Calu3 (cell line): ENCODE measurements at regions of chr15 and their contacts with region 1.

Region 1: GRCh38 chr15:57640935-57641682 is 49.4 kb downstream of the MYZAP start:
- DNase-seq: peak; percentile 64
- H3K4me3 Mint-ChIP-seq: no peak overlapping the region
- H3K27ac Mint-ChIP-seq: no peak overlapping the region
- H3K4me1 Mint-ChIP-seq: no peaks in the 10 kb centered on the region
- H3K27me3 Mint-ChIP-seq: no peaks in the 10 kb centered on the region
- CTCF ChIP-seq: peak; percentile 25

Region 2: GRCh38 chr15:57667171-57667849 is 26.2 kb after region 1 on chr15:
- CTCF ChIA-PET with region 1: no interaction called
- intact Hi-C with region 1: loop called (anchors 2 kb)
- DNase-seq: peak; percentile 55
- H3K4me3 Mint-ChIP-seq: peak overlapping the region; percentile 47
- H3K27ac Mint-ChIP-seq: peak overlapping the region; percentile 1
- H3K4me1 Mint-ChIP-seq: peaks cover 66% of the 10 kb centered on the region
- H3K27me3 Mint-ChIP-seq: no peaks in the 10 kb centered on the region
- CTCF ChIP-seq: no peak

Region 3: GRCh38 chr15:57706405-57707209 is 65.5 kb after region 1 on chr15 and contains the start of gene POLR2M:
- CTCF ChIA-PET with region 1: no interaction called
- intact Hi-C with region 1: loop called (anchors 1 kb)
- DNase-seq: peak; percentile 96
- H3K4me3 Mint-ChIP-seq: peak within 1 kb of the TSS; percentile 78
- H3K27ac Mint-ChIP-seq: peak within 1 kb of the TSS; percentile 63
- H3K4me1 Mint-ChIP-seq: peaks cover 34% of the 10 kb centered on the region
- H3K27me3 Mint-ChIP-seq: no peaks in the 10 kb centered on the region
- CTCF ChIP-seq: no peak
- total RNA-seq, gene POLR2M: 102 and 107 TPM in 2 replicates

Region 4: DNA sequence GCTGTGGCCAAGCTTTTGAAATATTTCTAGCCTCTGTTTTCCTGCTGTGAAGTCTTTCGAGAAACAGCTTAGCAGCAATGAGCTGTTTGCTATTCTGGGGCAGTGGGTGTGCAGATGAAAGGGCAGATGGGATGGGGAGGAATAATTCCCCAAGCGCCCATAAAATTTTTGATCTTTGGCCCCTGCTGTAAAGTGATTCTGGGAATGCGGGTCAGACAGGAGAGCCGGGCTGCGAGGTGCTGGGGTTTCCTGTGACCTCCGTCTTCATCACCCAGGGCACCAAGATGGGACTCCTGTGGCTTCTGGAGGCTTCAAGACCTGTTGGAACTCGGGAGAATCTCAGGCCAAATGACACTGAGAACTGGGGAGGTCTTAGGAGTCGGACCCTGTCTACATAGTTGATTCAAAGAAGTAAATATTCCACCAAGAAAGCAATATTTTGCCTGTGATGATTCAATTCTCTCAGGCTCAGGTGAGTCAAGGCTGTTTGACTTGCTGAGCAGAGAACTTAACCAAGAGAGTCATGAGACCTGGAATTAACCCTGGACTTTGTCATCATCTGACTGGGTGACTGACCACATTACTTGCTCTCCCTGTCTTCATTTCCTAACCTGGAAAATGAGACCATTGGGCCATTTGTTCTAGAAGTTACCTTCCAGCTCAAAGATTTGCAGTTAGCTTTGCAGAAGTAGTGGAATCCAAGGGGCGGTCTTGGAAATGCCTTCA is 151.8 kb after region 1 on chr15:
- CTCF ChIA-PET with region 1: no interaction called
- intact Hi-C with region 1: no loop called
- DNase-seq: peak; percentile 17
- H3K4me3 Mint-ChIP-seq: no peak overlapping the region
- H3K27ac Mint-ChIP-seq: no peak overlapping the region
- H3K4me1 Mint-ChIP-seq: peaks cover 22% of the 10 kb centered on the region
- H3K27me3 Mint-ChIP-seq: peaks cover 30% of the 10 kb centered on the region
- CTCF ChIP-seq: no peak

Region 5: GRCh38 chr15:57861036-57861638 is 220.0 kb after region 1 on chr15:
- CTCF ChIA-PET with region 1: interaction called, 3 read pairs
- intact Hi-C with region 1: loop called (anchors 1 kb)
- DNase-seq: peak; percentile 61
- H3K4me3 Mint-ChIP-seq: no peak overlapping the region
- H3K27ac Mint-ChIP-seq: no peak overlapping the region
- H3K4me1 Mint-ChIP-seq: peaks cover 5% of the 10 kb centered on the region
- H3K27me3 Mint-ChIP-seq: peaks cover 21% of the 10 kb centered on the region
- CTCF ChIP-seq: peak; percentile 56

Region 6: DNA sequence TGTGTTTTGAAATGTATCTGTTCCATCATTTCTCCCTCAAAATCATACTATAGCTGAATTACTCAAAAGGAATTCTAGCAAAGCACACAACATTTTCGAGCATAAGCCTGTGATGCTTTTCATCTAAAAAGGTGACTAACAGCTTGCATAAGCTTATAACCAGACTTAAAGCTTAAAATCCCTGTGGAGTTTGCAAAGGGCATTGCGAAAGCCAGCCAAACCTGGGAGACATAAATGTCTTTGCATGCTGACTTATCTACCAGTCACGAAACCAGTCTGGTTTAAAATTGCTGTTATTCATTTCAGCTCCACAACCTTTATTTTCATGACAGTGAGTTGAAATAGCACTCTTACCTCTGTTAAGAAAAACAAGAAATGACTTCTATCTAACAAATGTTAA is 755.1 kb after region 1 on chr15:
- CTCF ChIA-PET with region 1: interaction called, 16 read pairs
- intact Hi-C with region 1: no loop called
- DNase-seq: no peak
- H3K4me3 Mint-ChIP-seq: no peak overlapping the region
- H3K27ac Mint-ChIP-seq: no peak overlapping the region
- H3K4me1 Mint-ChIP-seq: peaks cover 23% of the 10 kb centered on the region
- H3K27me3 Mint-ChIP-seq: no peaks in the 10 kb centered on the region
- CTCF ChIP-seq: no peak